MCF 10A (cell line): ENCODE measurements at regions of chr18 and their contacts with region 1.

Region 1: DNA sequence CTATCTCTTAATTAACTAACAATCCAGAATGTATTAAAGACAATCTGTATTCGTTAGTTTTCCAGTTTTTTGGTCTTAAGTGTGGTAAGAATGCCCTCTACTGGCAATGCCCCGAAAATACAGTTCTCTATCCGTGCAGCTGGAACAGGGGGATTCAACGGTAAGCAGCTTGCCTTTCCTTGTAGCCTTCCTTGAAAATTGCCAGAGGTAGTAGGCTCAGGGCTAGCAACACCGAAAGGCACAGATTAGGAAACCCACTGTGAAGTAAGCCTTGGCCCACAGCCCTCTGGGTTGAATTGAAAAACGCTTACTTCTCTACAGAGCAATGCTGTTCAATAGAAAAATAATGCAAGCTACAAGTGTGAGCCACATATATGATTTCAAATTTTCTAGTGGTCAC is 17.1 kb upstream of the VPS4B start:
- DNase-seq: peak; percentile 71
- H3K4me3 Mint-ChIP-seq: no peak overlapping the region
- H3K27ac Mint-ChIP-seq: no peak overlapping the region
- H3K4me1 Mint-ChIP-seq: peaks cover 34% of the 10 kb centered on the region
- H3K27me3 Mint-ChIP-seq: no peaks in the 10 kb centered on the region
- CTCF ChIP-seq: peak; percentile 74

Region 2: DNA sequence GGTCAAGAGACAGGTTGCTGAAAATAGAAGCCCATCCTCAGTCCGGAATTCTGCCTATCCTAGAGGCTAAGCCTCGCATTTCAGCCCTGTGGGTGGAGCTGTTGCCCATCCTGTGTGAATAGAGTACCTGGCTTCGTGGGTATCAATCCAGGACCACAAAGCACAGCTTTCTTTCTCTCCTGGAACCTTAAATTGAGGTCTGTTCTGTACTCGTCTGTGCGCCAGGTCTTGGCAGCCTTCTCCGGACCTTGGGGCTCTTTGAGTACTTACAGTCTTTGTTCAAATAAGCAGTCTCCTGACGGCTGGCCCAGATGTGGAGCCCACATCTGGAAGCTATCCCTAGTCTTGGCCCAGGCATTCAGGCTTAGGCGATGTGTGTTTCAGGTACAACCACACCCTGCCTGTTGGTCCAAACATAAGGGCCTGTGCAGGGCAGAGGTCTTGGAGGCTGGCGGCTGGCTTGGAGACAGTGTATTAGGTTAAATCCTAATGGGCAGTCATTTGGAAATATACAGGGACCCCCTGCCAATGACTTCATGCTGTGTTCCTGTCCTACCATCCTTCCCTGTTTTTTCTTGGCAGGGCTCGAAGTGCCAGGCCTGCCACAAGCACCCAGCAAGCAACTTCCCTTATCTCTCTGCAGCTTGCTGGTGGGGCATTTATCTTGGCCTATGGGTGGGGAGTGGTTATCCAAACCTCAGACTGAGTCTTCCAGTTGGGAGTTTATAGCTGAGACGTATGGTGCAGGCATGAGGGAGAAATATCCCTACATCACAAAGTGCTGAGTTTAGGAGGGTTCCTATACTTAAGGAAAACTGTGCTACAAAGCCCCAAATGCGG is 413.9 kb before region 1 on chr18:
- CTCF ChIA-PET with region 1: interaction called, 5 read pairs
- POLR2A ChIA-PET with region 1: no interaction called
- intact Hi-C with region 1: loop called (anchors 2 kb)
- DNase-seq: peak; percentile 56
- H3K4me3 Mint-ChIP-seq: no peak overlapping the region
- H3K27ac Mint-ChIP-seq: no peak overlapping the region
- H3K4me1 Mint-ChIP-seq: no peaks in the 10 kb centered on the region
- H3K27me3 Mint-ChIP-seq: peaks cover 13% of the 10 kb centered on the region
- CTCF ChIP-seq: peak; percentile 41

Region 3: GRCh38 chr18:63320046-63320689 is 119.2 kb before region 1 on chr18:
- CTCF ChIA-PET with region 1: interaction called, 8 read pairs
- POLR2A ChIA-PET with region 1: interaction called, 5 read pairs
- intact Hi-C with region 1: loop called (anchors 1 kb)
- DNase-seq: peak; percentile 83
- H3K4me3 Mint-ChIP-seq: peak overlapping the region; percentile 96
- H3K27ac Mint-ChIP-seq: no peak overlapping the region
- H3K4me1 Mint-ChIP-seq: peaks cover 23% of the 10 kb centered on the region
- H3K27me3 Mint-ChIP-seq: no peaks in the 10 kb centered on the region
- CTCF ChIP-seq: no peak

Region 4: GRCh38 chr18:63367053-63367953 is 72.0 kb before region 1 on chr18 and contains the start of gene KDSR:
- CTCF ChIA-PET with region 1: interaction called, 22 read pairs
- POLR2A ChIA-PET with region 1: interaction called, 31 read pairs
- intact Hi-C with region 1: loop called (anchors 1 kb)
- DNase-seq: peak; percentile 98
- H3K4me3 Mint-ChIP-seq: peak within 1 kb of the TSS; percentile 97
- H3K27ac Mint-ChIP-seq: peak within 1 kb of the TSS; percentile 78
- H3K4me1 Mint-ChIP-seq: peaks cover 24% of the 10 kb centered on the region
- H3K27me3 Mint-ChIP-seq: no peaks in the 10 kb centered on the region
- CTCF ChIP-seq: no peak
- total RNA-seq, gene KDSR: 97.4 and 108 TPM in 2 replicates

Region 5: GRCh38 chr18:63422087-63422809 is 17.1 kb before region 1 on chr18 and contains the start of gene VPS4B:
- CTCF ChIA-PET with region 1: interaction called, 63 read pairs
- POLR2A ChIA-PET with region 1: interaction called, 264 read pairs
- intact Hi-C with region 1: loop called (anchors 2 kb)
- DNase-seq: peak; percentile 99
- H3K4me3 Mint-ChIP-seq: peak within 1 kb of the TSS; percentile 91
- H3K27ac Mint-ChIP-seq: peak within 1 kb of the TSS; percentile 100
- H3K4me1 Mint-ChIP-seq: peaks cover 12% of the 10 kb centered on the region
- H3K27me3 Mint-ChIP-seq: no peaks in the 10 kb centered on the region
- CTCF ChIP-seq: no peak
- total RNA-seq, gene VPS4B: 67.8 and 89.8 TPM in 2 replicates

Region 6: GRCh38 chr18:63476666-63477065 is 37.3 kb after region 1 on chr18 and contains the start of gene SERPINB5:
- CTCF ChIA-PET with region 1: interaction called, 47 read pairs
- POLR2A ChIA-PET with region 1: interaction called, 863 read pairs
- intact Hi-C with region 1: loop called (anchors 1 kb)
- DNase-seq: peak; percentile 99
- H3K4me3 Mint-ChIP-seq: peak within 1 kb of the TSS; percentile 95
- H3K27ac Mint-ChIP-seq: peak within 1 kb of the TSS; percentile 99
- H3K4me1 Mint-ChIP-seq: peaks cover 34% of the 10 kb centered on the region
- H3K27me3 Mint-ChIP-seq: no peaks in the 10 kb centered on the region
- CTCF ChIP-seq: no peak
- total RNA-seq, gene SERPINB5: 254 and 330 TPM in 2 replicates